Esophagus muscularis mucosa (tissue), 4 donors: ENCODE measurements at regions of chr7 and their contacts with region 1.

Region 1: GRCh38 chr7:128791121-128791961 is 427 bp upstream of the CCDC136 start:
- DNase-seq: peak; percentile 92
- H3K4me3 ChIP-seq: peak overlapping the region; percentile 83 to 96 (median 90)
- H3K27ac ChIP-seq: peak overlapping the region; percentile 84 to 87 (median 86)
- H3K4me1 ChIP-seq: peaks cover 25 to 31% (median 27%) of the 10 kb centered on the region in 4 donors
- H3K27me3 ChIP-seq: peaks cover 0 to 5% (median 0%) of the 10 kb centered on the region in 4 donors
- CTCF ChIP-seq: peak in 1 of 3 experiments; percentile 12
- EP300 ChIP-seq: no peak
- POLR2A ChIP-seq: no peak

Region 2: GRCh38 chr7:128739048-128739962 is 52.0 kb before region 1 on chr7 and contains the start of gene CALU:
- intact Hi-C with region 1: loop called (anchors 5 kb)
- DNase-seq: peak; percentile 99
- H3K4me3 ChIP-seq: peak within 1 kb of the TSS; percentile 78 to 97 (median 88)
- H3K27ac ChIP-seq: peak within 1 kb of the TSS; percentile 91 to 99 (median 94)
- H3K4me1 ChIP-seq: peaks cover 34 to 55% (median 54%) of the 10 kb centered on the region in 4 donors
- H3K27me3 ChIP-seq: no peaks in the 10 kb centered on the region
- CTCF ChIP-seq: peak in 1 of 3 experiments; percentile 12
- EP300 ChIP-seq: no peak
- POLR2A ChIP-seq: peak; percentile 96
- total RNA-seq, gene CALU: 188 to 269 (median 199) TPM

Region 3: DNA sequence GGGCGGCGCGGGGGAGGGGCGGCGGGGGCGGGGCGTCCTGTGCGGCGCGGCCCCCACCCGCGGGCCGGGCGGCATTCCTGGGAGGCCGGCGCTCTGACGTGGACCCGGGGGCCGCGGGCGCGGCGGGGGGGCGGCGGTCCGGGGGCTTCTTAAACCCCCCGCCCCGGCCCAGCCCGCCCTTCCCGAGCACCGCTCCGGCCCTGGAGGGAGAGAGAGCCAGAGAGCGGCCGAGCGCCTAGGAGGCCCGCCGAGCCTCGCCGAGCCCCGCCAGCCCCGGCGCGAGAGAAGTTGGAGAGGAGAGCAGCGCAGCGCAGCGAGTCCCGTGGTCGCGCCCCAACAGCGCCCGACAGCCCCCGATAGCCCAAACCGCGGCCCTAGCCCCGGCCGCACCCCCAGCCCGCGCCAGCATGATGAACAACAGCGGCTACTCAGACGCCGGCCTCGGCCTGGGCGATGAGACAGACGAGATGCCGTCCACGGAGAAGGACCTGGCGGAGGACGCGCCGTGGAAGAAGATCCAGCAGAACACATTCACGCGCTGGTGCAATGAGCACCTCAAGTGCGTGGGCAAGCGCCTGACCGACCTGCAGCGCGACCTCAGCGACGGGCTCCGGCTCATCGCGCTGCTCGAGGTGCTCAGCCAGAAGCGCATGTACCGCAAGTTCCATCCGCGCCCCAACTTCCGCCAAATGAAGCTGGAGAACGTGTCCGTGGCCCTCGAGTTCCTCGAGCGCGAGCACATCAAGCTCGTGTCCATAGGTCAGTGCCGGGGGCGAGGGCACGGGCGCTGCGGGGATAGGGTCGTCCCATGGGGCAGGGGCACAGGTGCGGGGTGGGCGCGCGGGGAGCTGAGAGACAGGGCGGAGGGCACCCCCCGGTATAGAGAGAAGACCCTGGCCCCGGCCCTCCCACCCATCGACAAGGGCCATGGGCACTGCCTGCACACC is 39.2 kb after region 1 on chr7 and contains the start of gene FLNC:
- intact Hi-C with region 1: loop called (anchors 5 kb)
- DNase-seq: no peak
- H3K4me3 ChIP-seq: peak within 1 kb of the TSS; percentile 79 to 86 (median 82)
- H3K27ac ChIP-seq: peak within 1 kb of the TSS; percentile 97 to 99 (median 98)
- H3K4me1 ChIP-seq: peaks cover 63 to 86% (median 83%) of the 10 kb centered on the region in 4 donors
- H3K27me3 ChIP-seq: peaks cover 0 to 4% (median 0%) of the 10 kb centered on the region in 4 donors
- CTCF ChIP-seq: no peak
- EP300 ChIP-seq: no peak
- POLR2A ChIP-seq: peak; percentile 89
- total RNA-seq, gene FLNC: 391 to 932 (median 533) TPM

Region 4: GRCh38 chr7:128869138-128869943 is 78.0 kb after region 1 on chr7:
- intact Hi-C with region 1: loop called (anchors 5 kb)
- DNase-seq: no peak
- H3K4me3 ChIP-seq: peak overlapping the region; percentile 62 to 72 (median 65)
- H3K27ac ChIP-seq: peak overlapping the region in 3 of 4 donors; percentile 14 to 57 (median 48)
- H3K4me1 ChIP-seq: peaks cover 19 to 43% (median 27%) of the 10 kb centered on the region in 4 donors
- H3K27me3 ChIP-seq: no peaks in the 10 kb centered on the region
- CTCF ChIP-seq: peak in 2 of 3 experiments; percentile 5 to 25
- EP300 ChIP-seq: no peak
- POLR2A ChIP-seq: no peak

Region 5: DNA sequence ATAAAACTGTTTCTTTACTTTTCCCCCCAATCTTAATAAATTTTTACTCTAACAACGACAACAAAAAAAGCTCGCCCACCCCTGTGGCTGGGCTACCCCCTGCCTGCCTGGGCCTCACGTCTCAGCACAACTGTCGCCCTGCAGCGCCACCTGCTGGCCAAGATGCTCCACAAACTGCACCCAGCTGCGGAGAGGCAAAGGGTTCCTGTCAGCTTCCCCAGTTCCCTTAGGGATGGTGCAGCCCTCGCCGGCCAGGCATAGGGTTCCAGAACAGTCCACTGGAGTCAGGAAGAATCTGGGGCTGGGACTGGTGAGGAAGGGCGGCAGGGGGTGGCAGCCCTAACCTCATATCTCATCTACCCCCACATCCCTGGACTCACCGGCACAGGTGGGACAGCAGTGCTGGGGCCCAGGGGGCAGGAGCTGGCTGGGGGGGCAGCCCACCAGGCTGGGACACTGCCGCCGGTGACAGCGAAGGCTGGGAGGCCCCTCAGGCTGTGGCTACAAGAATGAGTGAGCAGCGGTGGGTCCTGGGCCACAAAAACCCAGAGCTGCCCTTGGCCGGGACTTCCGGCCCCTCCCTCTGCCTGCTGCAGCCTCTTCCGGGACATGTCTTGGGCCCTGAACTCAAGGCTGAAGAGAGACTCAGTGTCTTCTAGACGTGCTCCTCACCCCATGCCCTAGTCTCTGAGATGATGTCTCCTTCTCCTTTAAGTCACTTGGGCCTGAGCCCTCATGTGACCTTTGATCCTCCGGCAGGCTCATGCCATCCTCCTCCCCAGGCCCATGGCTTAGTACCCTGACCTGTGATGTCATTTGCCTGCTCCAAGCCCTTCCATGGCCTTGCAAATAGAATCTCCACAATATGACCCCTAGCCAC is 92.5 kb after region 1 on chr7:
- intact Hi-C with region 1: loop called (anchors 5 kb)
- DNase-seq: peak; percentile 97
- H3K4me3 ChIP-seq: peak overlapping the region in 1 of 4 donors; percentile 32
- H3K27ac ChIP-seq: no peak overlapping the region
- H3K4me1 ChIP-seq: peaks cover 0 to 16% (median 12%) of the 10 kb centered on the region in 4 donors
- H3K27me3 ChIP-seq: peaks cover 0 to 42% (median 0%) of the 10 kb centered on the region in 4 donors
- CTCF ChIP-seq: peak; percentile 89 to 95 (median 94)
- EP300 ChIP-seq: no peak
- POLR2A ChIP-seq: no peak